ENCODE measurements at regions of chr4 and their contacts with region 1.

Region 1: GRCh38 chr4:2761035-2761923 is 5.1 kb upstream of the TNIP2 start:
- DNase-seq: no peak
- ATAC-seq: peak; percentile 18
- H3K4me3 ChIP-seq: no peak overlapping the region
- H3K27ac ChIP-seq: no peak overlapping the region
- H3K4me1 ChIP-seq: peaks cover 14% of the 10 kb centered on the region
- H3K27me3 ChIP-seq: no peaks in the 10 kb centered on the region
- CTCF ChIP-seq: no peak
- EP300 ChIP-seq: no peak
- POLR2A ChIP-seq: no peak
- RAD21 ChIP-seq: no peak

Region 2: GRCh38 chr4:2800691-2801596 is 39.7 kb after region 1 on chr4:
- CTCF ChIA-PET with region 1: interaction called, 17 read pairs
- POLR2A ChIA-PET with region 1: interaction called, 3 read pairs
- RAD21 ChIA-PET with region 1: interaction called, 6 read pairs
- SMC1A ChIA-PET with region 1: interaction called, 4 read pairs
- in situ Hi-C with region 1: no loop called
- intact Hi-C with region 1: no loop called
- DNase-seq: peak; percentile 41
- ATAC-seq: peak; percentile 78
- H3K4me3 ChIP-seq: peak overlapping the region; percentile 77
- H3K27ac ChIP-seq: peak overlapping the region; percentile 82
- H3K4me1 ChIP-seq: peaks cover 62% of the 10 kb centered on the region
- H3K27me3 ChIP-seq: no peaks in the 10 kb centered on the region
- CTCF ChIP-seq: no peak
- EP300 ChIP-seq: 0 out of 4 replicates have a peak, but pooled peaks of 1 of the 2 experiments have one; percentile 43
- POLR2A ChIP-seq: no peak
- RAD21 ChIP-seq: no peak

Region 3: GRCh38 chr4:2862528-2862927 is 101.2 kb after region 1 on chr4:
- CTCF ChIA-PET with region 1: interaction called, 4 read pairs
- POLR2A ChIA-PET with region 1: no interaction called
- RAD21 ChIA-PET with region 1: interaction called, 11 read pairs
- SMC1A ChIA-PET with region 1: interaction called, 3 read pairs
- in situ Hi-C with region 1: no loop called
- intact Hi-C with region 1: no loop called
- DNase-seq: no peak
- ATAC-seq: peak; percentile 11; the same call in 2 of the 3 replicates
- H3K4me3 ChIP-seq: 0 out of 2 replicates have a peak overlapping the region, but pooled peaks have one; percentile 5
- H3K27ac ChIP-seq: peak overlapping the region; percentile 10; the same call in 1 of the 2 replicates
- H3K4me1 ChIP-seq: peaks cover 34% of the 10 kb centered on the region
- H3K27me3 ChIP-seq: no peaks in the 10 kb centered on the region
- CTCF ChIP-seq: no peak
- EP300 ChIP-seq: no peak
- POLR2A ChIP-seq: no peak
- RAD21 ChIP-seq: no peak

Region 4: DNA sequence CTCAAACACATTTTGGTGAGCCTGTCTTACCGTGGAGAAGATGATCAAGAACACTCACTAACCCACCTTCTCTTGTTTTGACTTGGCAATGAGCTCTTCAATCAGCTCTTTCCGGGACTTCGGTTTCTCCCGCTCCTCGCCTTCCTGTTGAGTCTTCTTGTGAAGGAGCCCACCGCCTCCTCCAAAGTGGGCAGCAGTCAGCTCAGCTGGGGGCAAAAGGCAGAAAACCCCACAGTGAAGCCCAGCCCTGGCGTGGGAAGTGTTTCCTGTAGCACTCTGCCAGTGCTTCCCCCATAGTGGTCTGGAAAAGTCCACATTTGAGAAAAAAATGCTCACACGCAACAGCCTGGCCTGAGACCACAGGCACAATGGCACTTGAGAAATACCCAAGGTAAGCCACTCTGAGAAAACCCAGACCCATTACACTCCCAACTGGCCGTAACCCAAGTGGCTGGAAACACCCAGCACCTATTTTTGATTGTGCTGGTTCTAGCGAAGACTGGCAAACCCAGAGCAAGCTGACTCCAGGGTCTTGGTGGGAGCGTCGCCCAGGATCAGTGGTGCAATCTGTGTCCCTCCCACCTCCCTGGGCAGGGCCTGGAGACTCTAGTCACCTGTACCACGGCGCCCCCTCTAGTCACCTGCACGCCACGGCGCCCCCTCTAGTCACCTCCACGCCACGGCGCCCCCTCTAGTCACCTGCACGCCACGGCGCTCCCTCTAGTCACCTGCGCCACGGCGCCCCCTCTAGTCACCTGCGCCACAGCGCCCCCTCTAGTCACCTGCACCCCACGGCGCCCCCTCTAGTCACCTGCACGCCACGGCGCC is 193.3 kb after region 1 on chr4:
- CTCF ChIA-PET with region 1: interaction called, 22 read pairs
- POLR2A ChIA-PET with region 1: no interaction called
- RAD21 ChIA-PET with region 1: interaction called, 4 read pairs
- SMC1A ChIA-PET with region 1: interaction called, 9 read pairs
- in situ Hi-C with region 1: loop called (anchors 25 kb)
- intact Hi-C with region 1: no loop called
- DNase-seq: peak; percentile 75
- ATAC-seq: peak; percentile 89
- H3K4me3 ChIP-seq: no peak overlapping the region
- H3K27ac ChIP-seq: peak overlapping the region; percentile 78
- H3K4me1 ChIP-seq: peaks cover 41% of the 10 kb centered on the region
- H3K27me3 ChIP-seq: no peaks in the 10 kb centered on the region
- CTCF ChIP-seq: peak in 2 of 3 experiments; percentile 48 to 49; a peak in 5 of 6 replicates
- EP300 ChIP-seq: peak in 1 of 2 experiments; percentile 40; a peak in 2 of 4 replicates
- POLR2A ChIP-seq: no peak
- RAD21 ChIP-seq: 0 out of 2 replicates have a peak, but pooled peaks have one; percentile 8

Region 5: GRCh38 chr4:3047464-3048286 is 286.4 kb after region 1 on chr4:
- CTCF ChIA-PET with region 1: no interaction called
- POLR2A ChIA-PET with region 1: no interaction called
- RAD21 ChIA-PET with region 1: no interaction called
- SMC1A ChIA-PET with region 1: no interaction called
- in situ Hi-C with region 1: no loop called
- intact Hi-C with region 1: loop called (anchors 10 kb)
- DNase-seq: peak; percentile 99
- ATAC-seq: peak; percentile 95
- H3K4me3 ChIP-seq: no peak overlapping the region
- H3K27ac ChIP-seq: peak overlapping the region; percentile 86
- H3K4me1 ChIP-seq: peaks cover 38% of the 10 kb centered on the region
- H3K27me3 ChIP-seq: no peaks in the 10 kb centered on the region
- CTCF ChIP-seq: peak; percentile 68 to 81 (median 72)
- EP300 ChIP-seq: peak in 1 of 2 experiments; percentile 71; a peak in 3 of 4 replicates
- POLR2A ChIP-seq: peak; percentile 51; the same call in 1 of the 2 replicates
- RAD21 ChIP-seq: peak; percentile 93

Measured in GM12878 (cell line).